Ascending aorta (tissue), 2 donors: ENCODE measurements at regions of chr10 and their contacts with region 1.

Region 1: DNA sequence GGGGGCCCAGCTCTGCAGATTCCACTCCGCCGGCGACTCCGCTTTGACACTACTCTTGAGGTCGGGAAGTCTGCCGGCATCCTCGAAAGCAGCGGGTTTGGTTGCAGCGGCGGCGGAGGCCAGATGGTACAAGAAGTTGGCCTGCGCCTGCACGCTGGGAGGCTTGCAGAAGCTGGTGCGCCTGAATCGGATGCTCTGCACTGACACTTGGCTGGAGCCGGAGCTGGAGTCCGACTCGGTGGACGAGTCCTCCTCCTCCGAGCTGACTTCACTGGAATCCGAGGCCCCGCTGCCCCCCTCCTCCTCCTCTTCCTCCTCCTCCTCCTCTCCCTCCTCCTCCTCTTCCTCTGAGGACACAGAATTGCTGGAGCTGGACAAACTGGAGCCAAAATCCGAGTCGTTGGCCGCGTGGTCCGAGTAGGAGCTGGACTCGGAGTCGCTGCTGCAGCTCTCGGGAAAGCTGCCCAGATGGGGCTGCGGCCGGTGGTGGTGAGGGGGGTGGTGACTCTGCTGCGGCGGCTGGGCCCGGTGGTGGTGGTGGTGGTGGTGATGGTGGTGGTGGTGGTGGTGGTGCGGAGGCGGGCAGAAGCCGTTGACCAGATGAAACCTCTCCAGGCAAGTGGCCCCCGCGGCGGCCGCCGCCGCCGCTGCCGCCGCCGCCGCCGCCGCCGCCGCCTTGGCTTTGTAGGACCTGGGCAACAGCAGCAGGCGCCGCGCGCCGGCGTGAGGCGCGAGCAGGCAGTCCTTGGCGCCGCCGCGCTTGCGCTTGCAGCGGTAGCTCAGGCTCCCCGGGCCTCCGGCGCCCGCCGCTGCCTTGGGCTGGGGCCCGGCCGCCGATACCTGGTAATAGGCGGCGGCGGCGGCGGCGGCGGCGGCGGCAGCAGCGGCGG is 9.0 kb downstream of the SKIDA1 start:
- DNase-seq: peak in 1 of 2 donors; percentile 78
- H3K4me3 ChIP-seq: peak overlapping the region; percentile 63 to 88
- H3K27ac ChIP-seq: peak overlapping the region in 1 of 2 donors; percentile 69
- H3K4me1 ChIP-seq: peaks cover 0 to 13% of the 10 kb centered on the region in 2 donors
- H3K27me3 ChIP-seq: no peaks in the 10 kb centered on the region
- CTCF ChIP-seq: no peak

Region 2: GRCh38 chr10:21533467-21534279 is 17.2 kb after region 1 on chr10 and contains the start of gene MLLT10:
- intact Hi-C with region 1: loop called (anchors 2 kb)
- DNase-seq: peak; percentile 82 to 96
- H3K4me3 ChIP-seq: peak within 1 kb of the TSS; percentile 81 to 93
- H3K27ac ChIP-seq: peak within 1 kb of the TSS; percentile 89 to 94
- H3K4me1 ChIP-seq: peaks cover 0 to 10% of the 10 kb centered on the region in 2 donors
- H3K27me3 ChIP-seq: no peaks in the 10 kb centered on the region
- CTCF ChIP-seq: peak; percentile 37 to 48 (median 42)
- total RNA-seq, gene MLLT10: 16.3 TPM